ENCODE measurements at regions of chr14 and their contacts with region 1.

Region 1: GRCh38 chr14:71753126-71753830 is 179.0 kb upstream of the RGS6 start:
- DNase-seq: peak; percentile 98
- H3K4me3 ChIP-seq: peak overlapping the region; percentile 15 to 21
- H3K27ac ChIP-seq: no peak overlapping the region
- H3K4me1 ChIP-seq: peaks cover 5% of the 10 kb centered on the region
- H3K27me3 ChIP-seq: no peaks in the 10 kb centered on the region
- CTCF ChIP-seq: peak; percentile 78 to 83 (median 81)
- POLR2A ChIP-seq: no peak

Region 2: DNA sequence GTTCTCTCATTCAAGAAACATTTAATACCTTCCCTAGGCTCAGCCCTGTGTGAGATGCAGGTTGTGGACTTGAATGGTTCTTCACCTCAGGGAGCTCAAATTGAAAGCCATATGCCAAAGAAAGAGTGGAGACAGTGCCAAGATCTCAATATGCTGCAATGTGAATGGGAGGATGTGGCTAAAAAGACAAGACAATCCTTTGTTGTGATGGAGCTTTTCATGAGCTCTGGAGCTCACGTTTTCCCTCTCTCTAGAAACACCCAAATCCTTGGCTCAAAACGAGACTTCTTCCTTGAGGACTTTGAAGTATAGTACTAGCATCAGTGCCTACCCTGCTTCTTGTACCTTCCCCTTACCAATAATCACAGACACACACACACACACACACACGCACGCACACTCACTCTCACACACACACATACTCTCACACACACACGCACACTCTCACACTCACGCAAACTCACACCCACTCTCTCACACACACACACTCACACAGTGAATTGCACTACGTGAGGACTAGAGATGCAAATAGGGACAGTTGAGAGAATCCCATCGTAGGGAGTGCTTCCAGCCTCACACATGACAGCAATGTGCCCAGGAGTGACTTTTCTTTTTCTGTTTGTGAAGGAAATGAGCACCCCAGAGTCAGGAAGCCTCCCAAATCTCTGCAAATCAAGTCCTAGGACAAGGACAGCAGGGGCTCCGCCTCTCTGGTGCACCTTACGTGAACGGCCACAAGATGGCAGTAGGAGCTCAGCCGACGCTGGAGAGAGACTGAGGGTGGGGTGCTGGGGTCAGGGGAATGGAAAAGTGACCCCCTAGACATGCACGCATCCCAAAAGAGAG is 614.6 kb before region 1 on chr14:
- intact Hi-C with region 1: loop called (anchors 5 kb)
- DNase-seq: peak; percentile 66
- H3K4me3 ChIP-seq: no peak overlapping the region
- H3K27ac ChIP-seq: no peak overlapping the region
- H3K4me1 ChIP-seq: no peaks in the 10 kb centered on the region
- H3K27me3 ChIP-seq: no peaks in the 10 kb centered on the region
- CTCF ChIP-seq: peak; percentile 72 to 91 (median 79)
- POLR2A ChIP-seq: no peak

Measured in testis (tissue), 5 donors.